K562 (cell line): ENCODE measurements at regions of chr10 and their contacts with region 1.

Region 1: DNA sequence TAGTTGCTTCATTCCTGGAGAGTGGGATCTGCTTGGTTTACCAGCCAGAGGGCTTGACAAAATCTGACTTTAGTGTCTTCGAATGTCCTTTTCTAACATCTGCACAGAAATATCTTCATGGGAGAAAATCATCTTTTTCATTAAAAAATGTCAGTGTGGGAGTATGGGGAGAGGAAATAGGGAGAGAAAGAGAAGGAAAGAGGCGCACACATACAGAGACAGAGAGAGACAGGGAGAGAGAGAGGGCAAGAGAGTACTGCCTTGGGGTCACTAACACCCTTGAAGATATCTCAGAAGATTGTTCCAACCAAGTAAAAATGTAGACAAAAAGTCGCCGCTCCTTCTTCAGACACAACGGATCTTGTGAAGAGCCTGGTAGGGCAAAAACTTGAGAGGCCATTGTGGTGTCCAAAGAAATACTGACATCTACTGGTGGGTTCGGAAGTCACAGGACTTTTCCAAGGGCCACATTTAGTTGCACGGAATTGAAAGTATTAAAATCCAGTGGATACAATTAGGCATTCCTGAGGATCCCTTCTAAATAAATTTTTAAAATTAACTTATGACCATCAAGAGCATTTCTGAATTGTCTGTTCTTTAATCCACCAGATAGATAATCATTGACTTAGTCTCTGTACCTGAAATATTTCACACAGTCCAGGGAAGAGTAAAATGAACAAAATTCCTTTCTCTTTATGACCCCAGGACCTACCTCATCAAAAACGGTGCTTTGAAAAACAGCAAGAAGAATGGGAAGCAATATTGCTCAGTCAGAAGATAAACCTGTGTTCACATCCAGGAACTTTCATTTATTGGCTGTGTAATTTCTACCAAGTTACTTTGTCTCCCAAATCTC is 29.7 kb downstream of the VIM start:
- DNase-seq: peak; percentile 63 to 82 (median 67)
- ATAC-seq: peak; percentile 96
- H3K4me3 ChIP-seq: no peak overlapping the region
- H3K27ac ChIP-seq: no peak overlapping the region
- H3K4me1 ChIP-seq: no peaks in the 10 kb centered on the region; a peak in 1 of 5 replicates
- H3K27me3 ChIP-seq: no peaks in the 10 kb centered on the region
- CTCF ChIP-seq: peak; percentile 79 to 94 (median 80)
- EP300 ChIP-seq: no peak
- POLR2A ChIP-seq: no peak
- RAD21 ChIP-seq: peak; percentile 95 to 98

Region 2: DNA sequence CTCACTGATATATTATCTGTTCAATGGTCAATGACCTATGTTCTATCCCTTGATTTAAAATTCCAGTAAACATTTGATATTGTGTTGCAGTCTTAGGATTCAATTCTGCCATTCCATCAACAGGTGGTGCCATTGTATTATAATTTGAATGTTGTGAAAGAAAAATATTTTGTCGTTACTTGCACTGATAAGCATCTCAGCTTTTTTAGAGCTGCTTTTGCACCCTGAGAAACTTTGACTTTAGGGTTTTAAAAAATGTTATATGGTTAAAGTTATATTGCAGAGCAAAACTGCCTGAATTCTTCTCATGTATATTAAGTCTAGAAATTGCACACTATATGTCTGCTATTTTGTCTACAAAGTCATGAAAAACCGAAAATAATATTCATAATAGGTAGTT is 1378.6 kb before region 1 on chr10:
- CTCF ChIA-PET with region 1: no interaction called
- POLR2A ChIA-PET with region 1: no interaction called
- in situ Hi-C with region 1: loop called (anchors 10 kb)
- intact Hi-C with region 1: no loop called
- DNase-seq: peak; percentile 40 to 49 (median 46)
- ATAC-seq: peak; percentile 74
- H3K4me3 ChIP-seq: no peak overlapping the region
- H3K27ac ChIP-seq: no peak overlapping the region
- H3K4me1 ChIP-seq: peaks cover 7 to 8% of the 10 kb centered on the region in 2 experiments; a peak in 4 of 5 replicates
- H3K27me3 ChIP-seq: peaks cover 5 to 11% of the 10 kb centered on the region in 2 experiments; a peak in 1 of 5 replicates
- CTCF ChIP-seq: peak; percentile 45 to 79 (median 61); a peak in 5 of 6 replicates
- EP300 ChIP-seq: no peak
- POLR2A ChIP-seq: no peak
- RAD21 ChIP-seq: peak; percentile 87

Region 3: DNA sequence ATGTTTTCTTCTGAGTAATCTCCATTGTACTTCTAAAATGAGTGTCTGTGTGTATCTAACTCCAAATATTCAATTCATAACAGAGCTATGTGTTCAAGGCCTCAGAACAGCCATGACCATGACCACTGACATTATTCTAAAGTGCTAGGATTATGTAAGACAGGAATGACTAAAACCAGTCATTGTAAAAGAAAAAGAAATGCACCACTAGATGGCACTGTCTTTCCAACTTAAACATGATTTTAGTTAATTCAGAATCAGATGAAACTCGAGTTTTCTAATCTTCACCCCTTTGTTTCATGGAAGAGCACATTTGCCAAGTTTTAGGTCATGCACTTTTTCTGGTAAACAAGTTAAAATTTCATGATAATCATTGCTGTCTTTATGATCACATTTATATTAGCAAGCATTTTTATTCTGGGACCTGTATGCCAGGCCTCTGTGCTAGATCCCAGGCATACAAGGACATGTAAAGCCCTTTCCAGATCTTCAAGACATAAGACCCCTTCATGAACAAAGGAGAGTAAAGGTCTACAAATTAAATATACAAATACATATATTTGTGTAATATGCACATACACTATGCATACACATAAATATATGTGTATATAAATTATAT is 414.3 kb before region 1 on chr10:
- CTCF ChIA-PET with region 1: interaction called, 36 read pairs
- POLR2A ChIA-PET with region 1: no interaction called
- in situ Hi-C with region 1: loop called (anchors 5 kb)
- intact Hi-C with region 1: loop called (anchors 2 kb)
- DNase-seq: peak in 3 of 4 experiments; percentile 10 to 67 (median 21)
- ATAC-seq: peak; percentile 80
- H3K4me3 ChIP-seq: no peak overlapping the region
- H3K27ac ChIP-seq: no peak overlapping the region
- H3K4me1 ChIP-seq: no peaks in the 10 kb centered on the region
- H3K27me3 ChIP-seq: no peaks in the 10 kb centered on the region
- CTCF ChIP-seq: peak; percentile 35 to 77 (median 45); a peak in 3 of 6 replicates
- EP300 ChIP-seq: no peak
- POLR2A ChIP-seq: no peak
- RAD21 ChIP-seq: peak; percentile 65 to 71

Region 4: GRCh38 chr10:16853201-16853600 is 404.5 kb before region 1 on chr10:
- CTCF ChIA-PET with region 1: interaction called, 4 read pairs
- POLR2A ChIA-PET with region 1: no interaction called
- in situ Hi-C with region 1: loop called (anchors 5 kb)
- intact Hi-C with region 1: no loop called
- DNase-seq: peak in 2 of 4 experiments; percentile 17 to 45
- ATAC-seq: peak; percentile 71
- H3K4me3 ChIP-seq: no peak overlapping the region
- H3K27ac ChIP-seq: no peak overlapping the region
- H3K4me1 ChIP-seq: no peaks in the 10 kb centered on the region
- H3K27me3 ChIP-seq: peaks cover 0 to 2% of the 10 kb centered on the region in 2 experiments; a peak in 2 of 5 replicates
- CTCF ChIP-seq: peak; percentile 29 to 71 (median 44); a peak in 4 of 6 replicates
- EP300 ChIP-seq: no peak
- POLR2A ChIP-seq: no peak
- RAD21 ChIP-seq: peak; percentile 74 to 79

Region 5: GRCh38 chr10:16891375-16892313 is 366.1 kb before region 1 on chr10:
- CTCF ChIA-PET with region 1: interaction called, 11 read pairs
- POLR2A ChIA-PET with region 1: interaction called, 3 read pairs
- in situ Hi-C with region 1: no loop called
- intact Hi-C with region 1: loop called (anchors 1 kb)
- DNase-seq: peak; percentile 41 to 81 (median 55)
- ATAC-seq: peak; percentile 94
- H3K4me3 ChIP-seq: peak overlapping the region; percentile 20
- H3K27ac ChIP-seq: peak overlapping the region; percentile 77
- H3K4me1 ChIP-seq: peaks cover 0 to 6% of the 10 kb centered on the region in 2 experiments; a peak in 2 of 5 replicates
- H3K27me3 ChIP-seq: 0 out of 5 replicates have a peak, but pooled peaks cover 0 to 2% of the 10 kb centered on the region in 2 experiments
- CTCF ChIP-seq: peak; percentile 65 to 83 (median 82)
- EP300 ChIP-seq: peak; percentile 50; the same call in 1 of the 2 replicates
- POLR2A ChIP-seq: peak; percentile 100
- RAD21 ChIP-seq: peak; percentile 83 to 89

Region 6: GRCh38 chr10:16950656-16951601 is 306.8 kb before region 1 on chr10:
- CTCF ChIA-PET with region 1: no interaction called
- POLR2A ChIA-PET with region 1: no interaction called
- in situ Hi-C with region 1: no loop called
- intact Hi-C with region 1: loop called (anchors 2 kb)
- DNase-seq: peak; percentile 20 to 72 (median 37)
- ATAC-seq: peak; percentile 86
- H3K4me3 ChIP-seq: no peak overlapping the region
- H3K27ac ChIP-seq: no peak overlapping the region
- H3K4me1 ChIP-seq: peaks cover 0 to 6% of the 10 kb centered on the region in 2 experiments; a peak in 1 of 5 replicates
- H3K27me3 ChIP-seq: no peaks in the 10 kb centered on the region
- CTCF ChIP-seq: no peak
- EP300 ChIP-seq: no peak
- POLR2A ChIP-seq: no peak
- RAD21 ChIP-seq: no peak

Region 7: GRCh38 chr10:17029581-17030271 is 228.0 kb before region 1 on chr10:
- CTCF ChIA-PET with region 1: no interaction called
- POLR2A ChIA-PET with region 1: no interaction called
- in situ Hi-C with region 1: no loop called
- intact Hi-C with region 1: no loop called
- DNase-seq: peak; percentile 62 to 91 (median 72)
- ATAC-seq: peak; percentile 91
- H3K4me3 ChIP-seq: no peak overlapping the region
- H3K27ac ChIP-seq: peak overlapping the region; percentile 26
- H3K4me1 ChIP-seq: peaks cover 4 to 23% of the 10 kb centered on the region in 2 experiments; a peak in 4 of 5 replicates
- H3K27me3 ChIP-seq: no peaks in the 10 kb centered on the region
- CTCF ChIP-seq: no peak
- EP300 ChIP-seq: peak; percentile 97
- POLR2A ChIP-seq: 0 out of 2 replicates have a peak, but pooled peaks have one; percentile 32
- RAD21 ChIP-seq: peak in 1 of 2 experiments; percentile 29; a peak in 1 of 4 replicates

Region 8: DNA sequence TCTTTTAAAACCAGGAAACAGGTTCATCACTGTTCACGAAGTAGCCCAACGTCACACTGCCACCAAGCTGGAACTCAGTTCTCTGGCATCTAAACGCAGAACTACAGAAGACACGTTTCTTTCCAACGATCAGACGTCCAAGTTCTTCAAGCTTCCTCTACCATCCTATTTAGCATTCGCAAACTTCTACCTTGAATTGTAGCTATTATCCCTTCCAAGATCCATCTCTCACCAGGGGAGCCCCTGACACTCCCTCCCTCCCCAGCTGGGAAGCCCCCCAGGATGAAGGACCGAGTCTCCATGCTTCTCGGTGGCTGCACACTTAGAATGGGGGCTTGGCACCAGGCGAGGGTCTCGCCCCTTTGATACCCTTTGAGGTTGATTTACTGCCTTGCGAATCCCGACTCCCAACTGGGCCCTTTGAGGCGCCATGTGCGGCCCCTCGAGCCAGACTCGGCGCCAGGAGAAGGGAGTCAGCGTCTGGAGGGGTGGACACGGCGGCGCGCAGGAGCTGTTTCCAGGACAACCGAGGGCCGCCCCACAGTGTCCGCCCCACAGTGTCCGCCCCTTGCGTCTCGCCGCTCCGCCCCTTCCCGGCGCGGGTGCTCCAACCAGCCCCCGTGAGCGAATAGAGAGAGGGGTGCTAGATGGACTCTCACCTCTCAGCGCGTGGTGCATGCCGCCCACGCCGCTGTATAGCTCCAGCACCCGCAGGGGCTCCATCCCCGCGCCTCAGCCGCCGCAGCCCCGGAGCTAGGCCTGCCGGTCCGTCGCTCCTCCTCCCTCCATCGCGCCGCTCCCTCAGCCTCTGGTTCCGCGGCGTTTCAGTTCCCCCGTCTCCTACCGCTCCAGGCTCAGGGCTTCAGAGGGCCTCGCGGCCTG is 56.5 kb before region 1 on chr10 and contains the start of gene TRDMT1:
- CTCF ChIA-PET with region 1: no interaction called
- POLR2A ChIA-PET with region 1: interaction called, 3 read pairs
- in situ Hi-C with region 1: no loop called
- intact Hi-C with region 1: loop called (anchors 5 kb)
- DNase-seq: peak; percentile 86 to 94 (median 88)
- ATAC-seq: peak; percentile 97
- H3K4me3 ChIP-seq: peak within 1 kb of the TSS; percentile 67
- H3K27ac ChIP-seq: peak within 1 kb of the TSS; percentile 89
- H3K4me1 ChIP-seq: peaks cover 14 to 52% of the 10 kb centered on the region in 2 experiments
- H3K27me3 ChIP-seq: no peaks in the 10 kb centered on the region
- CTCF ChIP-seq: peak in 2 of 3 experiments; percentile 1 to 35; a peak in 2 of 6 replicates
- EP300 ChIP-seq: peak; percentile 3; the same call in 1 of the 2 replicates
- POLR2A ChIP-seq: peak; percentile 83
- RAD21 ChIP-seq: peak; percentile 17 to 53; a peak in 3 of 4 replicates
- polyA plus RNA-seq, gene TRDMT1: 8.7 to 9.3 TPM

Region 9: DNA sequence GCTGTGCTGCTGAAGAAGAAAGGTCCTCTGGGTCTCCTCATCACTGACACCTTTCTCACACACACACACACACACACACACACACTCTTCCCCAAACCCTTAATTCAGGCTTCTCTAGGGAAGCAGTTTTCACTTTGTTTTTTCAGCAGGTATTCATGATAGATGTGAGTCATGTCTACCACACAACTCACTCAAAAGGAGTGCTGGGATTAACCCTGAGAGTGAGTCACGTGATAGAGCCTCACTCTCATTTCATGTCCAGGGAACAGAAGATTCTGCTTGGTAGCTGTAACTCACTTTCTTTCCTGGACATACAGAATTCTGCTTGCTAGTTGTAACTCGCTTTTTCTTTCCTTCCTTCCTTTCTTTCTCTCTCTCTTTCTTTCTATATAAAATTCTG is 15.7 kb after region 1 on chr10:
- CTCF ChIA-PET with region 1: no interaction called
- POLR2A ChIA-PET with region 1: no interaction called
- in situ Hi-C with region 1: no loop called
- intact Hi-C with region 1: no loop called
- DNase-seq: no peak
- ATAC-seq: no peak
- H3K4me3 ChIP-seq: no peak overlapping the region
- H3K27ac ChIP-seq: no peak overlapping the region
- H3K4me1 ChIP-seq: no peaks in the 10 kb centered on the region
- H3K27me3 ChIP-seq: 0 out of 5 replicates have a peak, but pooled peaks cover 0 to 2% of the 10 kb centered on the region in 2 experiments
- CTCF ChIP-seq: no peak
- EP300 ChIP-seq: no peak
- POLR2A ChIP-seq: no peak
- RAD21 ChIP-seq: no peak